BJ (cell line): ENCODE measurements at regions of chr16 and their contacts with region 1.

Region 1: DNA sequence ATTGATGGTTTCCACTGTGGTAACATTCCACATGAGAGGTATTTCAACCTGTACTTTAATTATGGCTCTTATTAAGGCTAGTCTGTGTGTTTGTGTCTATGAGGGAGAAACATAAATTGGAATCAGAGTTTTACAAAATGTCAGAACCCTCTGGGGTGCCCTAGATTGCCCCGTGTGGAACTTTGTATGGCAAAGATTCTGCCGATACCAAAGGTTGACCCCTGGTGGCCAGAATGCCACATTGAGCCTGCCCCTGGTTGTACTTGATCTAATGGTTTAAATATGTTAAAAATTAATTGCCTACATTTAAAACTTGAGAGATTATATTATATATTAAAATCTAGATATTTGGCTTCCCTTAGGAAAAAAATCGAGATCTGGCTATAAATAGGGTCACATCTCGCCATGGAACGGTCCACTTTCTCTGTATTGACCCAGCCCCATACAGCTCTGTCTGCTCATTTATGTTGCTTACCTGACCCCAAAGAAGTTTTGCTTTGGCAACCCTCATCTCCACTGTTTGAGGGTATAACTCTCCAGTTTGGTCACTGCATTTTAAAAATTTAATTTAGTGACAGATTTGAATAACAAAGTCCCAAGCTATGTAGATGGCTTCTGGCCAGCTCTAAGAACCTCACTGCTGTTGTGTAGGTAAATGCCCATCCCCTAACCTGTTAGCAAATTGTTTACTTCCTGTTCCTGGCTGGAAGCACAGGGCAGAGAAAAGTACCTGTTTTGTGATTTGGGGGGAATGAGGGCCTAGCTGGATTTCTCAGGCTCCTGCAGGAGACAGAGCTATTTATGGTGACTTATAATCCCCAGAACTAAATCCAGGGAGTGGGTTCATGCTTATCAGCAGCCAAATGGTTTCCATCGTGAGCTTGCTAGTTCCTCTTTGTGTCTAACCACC is 95.0 kb downstream of the PLCG2 start:
- DNase-seq: no peak
- H3K4me3 ChIP-seq: no peak overlapping the region
- H3K27me3 ChIP-seq: no peaks in the 10 kb centered on the region
- CTCF ChIP-seq: peak; percentile 83

Region 2: DNA sequence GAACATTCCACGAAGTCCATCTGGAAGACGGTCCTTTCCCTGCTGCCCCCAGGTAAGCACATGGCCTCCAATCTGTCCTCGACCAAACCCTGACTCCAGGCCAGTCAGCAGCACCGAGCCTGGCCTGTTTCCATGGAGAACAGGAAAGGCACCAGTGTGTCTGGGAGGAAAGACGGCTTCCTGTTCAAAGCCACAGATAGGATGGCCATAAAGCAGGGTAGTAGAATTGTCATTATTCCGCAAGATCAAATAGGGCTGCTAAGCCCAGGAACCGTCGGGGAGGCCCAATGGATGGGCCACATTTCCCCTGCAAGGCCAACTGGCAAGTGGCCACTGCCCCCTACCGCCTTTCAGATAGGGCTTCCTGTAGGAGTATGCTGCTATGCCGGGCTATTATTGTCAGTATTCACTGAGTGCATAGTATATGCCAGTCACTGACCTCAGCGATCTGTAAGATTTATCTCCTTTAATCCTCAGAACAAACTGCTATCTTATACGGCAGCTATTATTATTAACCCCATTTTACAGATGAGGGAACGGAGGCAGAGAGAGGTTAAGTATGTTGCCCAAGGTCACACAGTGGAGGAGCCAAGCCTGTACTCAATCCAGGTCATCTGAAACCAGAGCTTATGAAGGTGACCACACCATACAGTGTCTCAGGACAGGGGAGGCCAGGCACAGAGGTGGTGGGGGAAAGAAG is 118.0 kb before region 1 on chr16:
- CTCF ChIA-PET with region 1: no interaction called
- POLR2A ChIA-PET with region 1: no interaction called
- DNase-seq: no peak
- H3K4me3 ChIP-seq: no peak overlapping the region
- H3K27me3 ChIP-seq: no peaks in the 10 kb centered on the region
- CTCF ChIP-seq: no peak

Region 3: DNA sequence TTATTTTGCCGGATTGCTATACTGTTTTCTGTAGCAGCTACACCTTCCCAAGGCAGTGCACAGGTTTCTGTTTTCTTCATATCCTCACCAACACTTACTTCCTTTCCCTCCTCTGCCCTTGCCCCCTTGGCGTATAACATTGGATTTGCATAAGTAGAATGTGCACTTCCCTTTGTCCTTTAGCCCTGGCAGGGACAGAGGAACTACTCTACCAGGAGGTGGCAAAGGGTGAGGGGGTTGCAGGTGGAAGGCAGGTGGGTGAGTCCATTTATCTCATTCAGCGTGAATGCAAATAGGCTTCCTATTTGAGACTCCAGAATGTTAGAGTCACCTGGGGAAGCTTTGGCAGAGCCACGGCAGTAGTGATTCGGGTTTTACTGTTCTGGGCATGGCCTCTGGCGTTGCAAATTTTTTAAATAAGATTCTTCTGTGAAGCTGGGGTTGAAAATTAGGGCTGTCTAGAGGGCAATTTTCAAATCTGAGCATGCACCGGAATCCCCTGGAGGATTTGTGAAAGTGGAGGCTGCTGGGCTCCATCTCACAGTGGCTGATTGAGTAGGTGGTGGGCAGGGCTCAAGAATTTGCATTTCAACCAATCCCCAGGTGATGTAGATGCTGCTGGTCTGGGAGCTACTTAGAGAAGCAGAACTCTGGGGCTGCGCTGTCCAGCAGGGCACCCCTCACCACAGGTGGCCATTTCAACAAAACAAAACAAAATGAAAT is 10.3 kb before region 1 on chr16:
- CTCF ChIA-PET with region 1: interaction called, 34 read pairs
- POLR2A ChIA-PET with region 1: no interaction called
- DNase-seq: no peak
- H3K4me3 ChIP-seq: no peak overlapping the region
- H3K27me3 ChIP-seq: no peaks in the 10 kb centered on the region
- CTCF ChIP-seq: no peak

Region 4: DNA sequence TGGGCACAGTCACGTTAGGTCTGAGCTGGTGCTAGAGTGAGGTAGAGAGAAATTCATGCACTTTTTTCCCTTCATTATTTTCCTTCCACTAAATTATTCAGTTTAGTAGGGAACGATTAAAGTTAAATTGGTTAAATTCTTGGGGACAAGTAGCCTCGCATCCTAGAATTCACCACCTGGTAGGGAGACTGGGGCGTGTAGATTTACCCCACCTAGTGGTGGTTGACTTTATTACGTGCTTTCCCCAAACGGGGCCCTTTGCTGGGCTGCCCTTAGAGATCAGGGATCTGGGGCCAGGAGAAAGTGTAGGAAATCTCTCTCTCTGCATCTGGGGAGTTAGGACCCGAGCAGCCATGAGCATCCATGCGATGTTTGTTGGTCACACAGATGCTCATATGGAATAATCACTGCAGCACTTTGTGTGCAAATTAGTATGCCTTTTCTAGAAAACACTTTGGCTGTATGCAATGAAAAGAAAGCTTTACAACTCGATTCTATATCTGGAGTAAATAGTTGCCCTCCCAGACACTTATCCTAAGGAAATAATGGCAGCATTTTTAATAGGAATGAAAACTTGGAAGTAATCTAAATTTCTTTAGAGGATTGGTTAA is 12.0 kb after region 1 on chr16:
- CTCF ChIA-PET with region 1: interaction called, 33 read pairs
- POLR2A ChIA-PET with region 1: no interaction called
- DNase-seq: no peak
- H3K4me3 ChIP-seq: no peak overlapping the region
- H3K27me3 ChIP-seq: no peaks in the 10 kb centered on the region; the same call in 1 of the 2 replicates
- CTCF ChIP-seq: peak; percentile 75